Lower leg skin (tissue), 4 donors: ENCODE measurements at regions of chr3 and their contacts with region 1.

Region 1: GRCh38 chr3:156246938-156247725 is 126.8 kb downstream of the KCNAB1 start:
- DNase-seq: no peak
- H3K4me3 ChIP-seq: no peak overlapping the region
- CTCF ChIP-seq: no peak
- POLR2A ChIP-seq: no peak

Region 2: DNA sequence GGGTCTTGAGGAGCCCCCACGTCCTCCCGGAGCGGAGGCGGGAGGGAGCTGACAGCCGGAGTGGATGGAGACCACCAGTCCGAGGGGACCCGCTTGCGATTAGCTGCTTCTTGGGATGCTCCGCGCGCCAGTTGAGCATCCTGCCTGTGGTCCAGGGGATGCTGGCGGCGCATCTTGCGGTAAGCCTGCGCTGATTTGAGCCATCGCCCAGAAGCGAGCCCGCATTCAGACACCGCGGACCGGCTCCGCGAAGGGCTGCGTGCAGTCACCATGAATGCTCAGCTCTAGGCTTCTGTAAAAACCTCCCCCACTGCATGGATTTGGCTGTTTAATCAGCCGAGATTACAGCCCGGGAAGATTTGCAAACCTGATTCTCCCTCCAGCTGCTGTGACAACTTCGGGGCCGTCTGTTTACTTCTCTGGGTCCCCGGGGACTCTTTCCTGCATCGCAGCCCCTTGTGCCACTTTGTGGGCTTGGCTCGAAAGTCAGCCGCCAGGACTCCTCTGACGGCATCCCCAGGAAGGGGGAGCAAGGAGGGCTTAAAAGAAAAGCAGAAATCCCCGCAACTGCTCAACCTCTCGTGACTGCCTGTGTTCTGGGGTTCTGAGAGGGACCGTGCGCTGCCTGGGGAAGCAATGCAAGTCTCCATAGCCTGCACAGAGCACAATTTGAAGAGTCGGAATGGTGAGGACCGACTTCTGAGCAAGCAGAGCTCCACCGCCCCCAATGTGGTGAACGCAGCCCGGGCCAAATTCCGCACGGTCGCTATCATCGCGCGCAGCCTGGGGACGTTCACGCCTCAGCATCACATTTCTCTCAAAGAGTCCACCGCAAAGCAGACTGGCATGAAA is 44.4 kb after region 1 on chr3:
- intact Hi-C with region 1: loop called (anchors 2 kb)
- DNase-seq: no peak
- H3K4me3 ChIP-seq: no peak overlapping the region
- CTCF ChIP-seq: no peak
- POLR2A ChIP-seq: no peak